Naive thymus-derived CD4-positive, alpha-beta T cell (primary cell): ENCODE measurements at regions of chr7 and their contacts with region 1.

Region 1: DNA sequence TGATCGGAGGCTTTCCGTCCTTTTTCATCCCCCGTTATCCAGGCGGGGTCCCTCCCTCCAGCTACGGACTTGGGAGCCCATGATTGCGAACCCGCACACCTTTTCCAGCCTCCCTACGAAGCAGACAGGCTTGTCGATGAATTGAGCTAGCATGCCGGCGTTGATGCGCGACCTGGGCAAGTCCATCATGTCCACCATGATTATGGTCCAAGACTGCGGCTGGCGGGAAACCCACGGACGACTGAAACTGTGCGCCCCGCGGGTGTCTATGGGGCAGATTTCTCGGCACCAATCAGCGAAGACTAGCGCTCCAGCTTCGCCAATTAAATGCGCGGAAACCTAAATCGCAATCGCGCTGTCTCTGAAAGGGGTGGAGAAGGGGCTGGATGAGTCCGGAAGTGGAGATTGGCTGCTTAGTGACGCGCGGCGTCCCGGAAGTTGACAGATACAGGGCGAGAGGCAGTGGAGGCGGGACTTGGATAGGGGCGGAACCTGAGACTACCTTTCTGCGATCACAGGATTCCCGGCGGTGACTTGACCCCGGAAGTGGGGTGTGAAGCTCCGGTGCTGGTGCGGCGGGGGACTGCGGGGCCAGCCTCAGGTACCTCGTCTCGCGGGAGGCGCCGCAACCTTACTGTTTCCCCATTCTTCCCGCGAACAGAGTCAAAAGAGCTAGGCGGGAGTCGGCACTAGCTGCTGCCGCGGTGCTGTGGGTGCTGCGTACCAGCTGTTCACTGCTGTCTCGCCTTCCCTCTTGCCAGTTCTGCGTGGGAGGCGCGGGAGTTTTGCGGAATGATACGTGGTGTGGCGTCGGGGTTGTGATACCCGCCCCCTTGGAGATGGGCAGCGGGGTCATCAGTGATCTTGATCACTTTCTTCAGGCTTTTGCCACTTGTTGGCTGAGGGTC is at the start of gene UMAD1:
- DNase-seq: peak; percentile 86 to 100 (median 99)
- ATAC-seq: peak; percentile 97
- H3K4me3 ChIP-seq: peak within 1 kb of the TSS; percentile 79
- H3K4me3 Mint-ChIP-seq: peak within 1 kb of the TSS; percentile 90 to 98 (median 96)
- H3K27ac ChIP-seq: peak within 1 kb of the TSS; percentile 98
- H3K27ac Mint-ChIP-seq: peak within 1 kb of the TSS; percentile 97 to 99 (median 98)
- H3K4me1 ChIP-seq: peaks cover 14 to 19% of the 10 kb centered on the region in 2 donors
- H3K4me1 Mint-ChIP-seq: peaks cover 31 to 67% (median 55%) of the 10 kb centered on the region in 7 donors
- H3K27me3 ChIP-seq: no peaks in the 10 kb centered on the region
- H3K27me3 Mint-ChIP-seq: no peaks in the 10 kb centered on the region
- total RNA-seq, gene UMAD1: 11.4 to 28.5 (median 14.5) TPM

Region 2: DNA sequence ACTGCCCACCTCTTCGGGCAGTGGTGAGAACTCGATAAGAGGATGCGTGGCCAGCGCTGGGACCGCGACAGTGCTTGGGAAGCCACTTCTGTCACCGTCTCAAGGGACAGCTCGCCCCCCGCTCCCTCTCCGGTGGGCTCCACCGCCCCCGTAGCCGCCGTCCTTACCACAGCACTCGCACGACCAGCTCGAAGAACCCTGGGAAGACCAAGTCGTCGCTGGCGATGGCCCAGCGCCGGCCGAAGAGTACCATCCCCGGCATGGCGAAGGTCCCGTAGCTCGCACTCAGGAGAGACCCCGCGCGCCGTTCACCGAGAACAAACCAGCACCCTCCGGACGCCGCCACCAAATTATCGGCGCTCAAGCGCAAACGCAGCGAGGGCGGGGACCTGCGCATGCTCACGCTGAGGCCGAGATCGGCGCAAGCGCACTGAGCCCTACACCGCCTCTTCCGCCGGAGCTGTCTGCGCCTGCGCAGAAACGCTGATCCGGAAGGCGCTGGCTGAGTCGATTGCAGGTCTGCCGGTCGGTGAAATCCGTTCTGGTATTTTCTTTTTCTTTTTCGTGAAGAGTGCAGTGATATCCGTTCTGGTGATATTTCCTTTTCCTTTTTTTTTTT is 1192.8 kb before region 1 on chr7 and contains the start of gene DAGLB:
- CTCF ChIA-PET with region 1: no interaction called
- POLR2A ChIA-PET with region 1: no interaction called
- intact Hi-C with region 1: loop called in 1 of 2 experiments (anchors 2 kb)
- DNase-seq: peak; percentile 94 to 99 (median 97)
- ATAC-seq: peak; percentile 87
- H3K4me3 ChIP-seq: peak within 1 kb of the TSS; percentile 87
- H3K4me3 Mint-ChIP-seq: peak within 1 kb of the TSS; percentile 92 to 99 (median 96)
- H3K27ac ChIP-seq: peak within 1 kb of the TSS; percentile 80
- H3K27ac Mint-ChIP-seq: peak within 1 kb of the TSS; percentile 95 to 98 (median 95)
- H3K4me1 ChIP-seq: peaks cover 8 to 16% of the 10 kb centered on the region in 2 donors
- H3K4me1 Mint-ChIP-seq: peaks cover 27 to 51% (median 40%) of the 10 kb centered on the region in 7 donors
- H3K27me3 ChIP-seq: no peaks in the 10 kb centered on the region
- H3K27me3 Mint-ChIP-seq: peaks cover 0 to 3% (median 0%) of the 10 kb centered on the region in 5 donors
- total RNA-seq, gene DAGLB: 20.6 to 44.3 (median 39.8) TPM

Region 3: GRCh38 chr7:7257899-7258692 is 382.4 kb before region 1 on chr7:
- CTCF ChIA-PET with region 1: no interaction called
- POLR2A ChIA-PET with region 1: no interaction called
- intact Hi-C with region 1: loop called in 1 of 2 experiments (anchors 1 kb)
- DNase-seq: no peak
- ATAC-seq: peak; percentile 60
- H3K4me3 ChIP-seq: no peak overlapping the region
- H3K4me3 Mint-ChIP-seq: peak overlapping the region; percentile 46 to 78 (median 71)
- H3K27ac ChIP-seq: peak overlapping the region; percentile 62
- H3K27ac Mint-ChIP-seq: peak overlapping the region; percentile 70 to 92 (median 86)
- H3K4me1 ChIP-seq: peaks cover 14 to 19% of the 10 kb centered on the region in 2 donors
- H3K4me1 Mint-ChIP-seq: peaks cover 10 to 64% (median 49%) of the 10 kb centered on the region in 7 donors
- H3K27me3 ChIP-seq: no peaks in the 10 kb centered on the region
- H3K27me3 Mint-ChIP-seq: no peaks in the 10 kb centered on the region

Region 4: GRCh38 chr7:7595451-7595850 is 45.0 kb before region 1 on chr7:
- CTCF ChIA-PET with region 1: interaction called, 5 read pairs
- POLR2A ChIA-PET with region 1: no interaction called
- intact Hi-C with region 1: loop called in 1 of 2 experiments (anchors 5 kb)
- DNase-seq: peak in 6 of 9 donors; percentile 14 to 45 (median 36)
- ATAC-seq: peak; percentile 65
- H3K4me3 ChIP-seq: no peak overlapping the region
- H3K4me3 Mint-ChIP-seq: no peak overlapping the region
- H3K27ac ChIP-seq: no peak overlapping the region
- H3K27ac Mint-ChIP-seq: no peak overlapping the region
- H3K4me1 ChIP-seq: peaks cover 0 to 3% of the 10 kb centered on the region in 2 donors
- H3K4me1 Mint-ChIP-seq: no peaks in the 10 kb centered on the region
- H3K27me3 ChIP-seq: no peaks in the 10 kb centered on the region
- H3K27me3 Mint-ChIP-seq: no peaks in the 10 kb centered on the region

Region 5: DNA sequence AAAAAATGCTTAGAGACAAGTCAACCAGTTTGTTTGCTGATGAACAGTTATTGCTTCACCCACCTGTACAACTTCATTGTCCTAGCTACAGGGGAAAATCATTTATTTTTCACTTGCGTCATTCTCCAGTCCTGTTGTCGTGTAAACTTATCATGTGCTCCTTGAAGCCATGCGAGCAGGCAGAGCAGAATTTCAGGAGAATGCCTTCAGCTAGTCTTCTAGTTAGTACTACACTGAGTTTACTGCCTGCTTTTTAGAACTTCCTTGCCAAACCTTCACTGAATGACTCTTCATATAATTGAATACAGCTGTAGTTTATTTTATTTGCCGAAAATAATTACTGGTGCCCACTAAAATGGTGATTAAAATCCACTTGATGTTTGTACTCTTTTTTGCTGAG is 62.4 kb after region 1 on chr7:
- CTCF ChIA-PET with region 1: no interaction called
- POLR2A ChIA-PET with region 1: no interaction called
- intact Hi-C with region 1: no loop called
- DNase-seq: no peak
- ATAC-seq: no peak
- H3K4me3 ChIP-seq: no peak overlapping the region
- H3K4me3 Mint-ChIP-seq: no peak overlapping the region
- H3K27ac ChIP-seq: no peak overlapping the region
- H3K27ac Mint-ChIP-seq: no peak overlapping the region
- H3K4me1 ChIP-seq: peaks cover 0 to 3% of the 10 kb centered on the region in 2 donors
- H3K4me1 Mint-ChIP-seq: peaks cover 10 to 47% (median 25%) of the 10 kb centered on the region in 7 donors
- H3K27me3 ChIP-seq: no peaks in the 10 kb centered on the region
- H3K27me3 Mint-ChIP-seq: no peaks in the 10 kb centered on the region

Region 6: GRCh38 chr7:7719236-7719635 is 78.8 kb after region 1 on chr7:
- CTCF ChIA-PET with region 1: no interaction called
- POLR2A ChIA-PET with region 1: no interaction called
- intact Hi-C with region 1: loop called in 1 of 2 experiments (anchors 1 kb)
- DNase-seq: peak in 8 of 9 donors; percentile 2 to 39 (median 24)
- ATAC-seq: peak; percentile 68
- H3K4me3 ChIP-seq: no peak overlapping the region
- H3K4me3 Mint-ChIP-seq: peak overlapping the region in 1 of 10 donors; percentile 37
- H3K27ac ChIP-seq: no peak overlapping the region
- H3K27ac Mint-ChIP-seq: peak overlapping the region in 4 of 9 donors; percentile 25 to 82 (median 50)
- H3K4me1 ChIP-seq: no peaks in the 10 kb centered on the region
- H3K4me1 Mint-ChIP-seq: peaks cover 3 to 20% (median 13%) of the 10 kb centered on the region in 7 donors
- H3K27me3 ChIP-seq: no peaks in the 10 kb centered on the region
- H3K27me3 Mint-ChIP-seq: no peaks in the 10 kb centered on the region

Region 7: GRCh38 chr7:8176370-8177081 is 536.1 kb after region 1 on chr7:
- CTCF ChIA-PET with region 1: interaction called, 3 read pairs
- POLR2A ChIA-PET with region 1: no interaction called
- intact Hi-C with region 1: loop called (anchors 1 kb)
- DNase-seq: peak; percentile 20 to 74 (median 70)
- ATAC-seq: peak; percentile 91
- H3K4me3 ChIP-seq: peak overlapping the region; percentile 44
- H3K4me3 Mint-ChIP-seq: peak overlapping the region; percentile 73 to 86 (median 77)
- H3K27ac ChIP-seq: peak overlapping the region; percentile 72
- H3K27ac Mint-ChIP-seq: peak overlapping the region; percentile 88 to 97 (median 96)
- H3K4me1 ChIP-seq: peaks cover 48 to 50% of the 10 kb centered on the region in 2 donors
- H3K4me1 Mint-ChIP-seq: peaks cover 36 to 70% (median 67%) of the 10 kb centered on the region in 7 donors
- H3K27me3 ChIP-seq: no peaks in the 10 kb centered on the region
- H3K27me3 Mint-ChIP-seq: no peaks in the 10 kb centered on the region